ENCODE measurements at regions of chr1 and their contacts with region 1.

Region 1: GRCh38 chr1:26233903-26234643 is at the start of gene CEP85:
- DNase-seq: peak; percentile 98
- total RNA-seq, gene CEP85: 16.7 and 20.8 TPM in 2 replicates

Region 2: DNA sequence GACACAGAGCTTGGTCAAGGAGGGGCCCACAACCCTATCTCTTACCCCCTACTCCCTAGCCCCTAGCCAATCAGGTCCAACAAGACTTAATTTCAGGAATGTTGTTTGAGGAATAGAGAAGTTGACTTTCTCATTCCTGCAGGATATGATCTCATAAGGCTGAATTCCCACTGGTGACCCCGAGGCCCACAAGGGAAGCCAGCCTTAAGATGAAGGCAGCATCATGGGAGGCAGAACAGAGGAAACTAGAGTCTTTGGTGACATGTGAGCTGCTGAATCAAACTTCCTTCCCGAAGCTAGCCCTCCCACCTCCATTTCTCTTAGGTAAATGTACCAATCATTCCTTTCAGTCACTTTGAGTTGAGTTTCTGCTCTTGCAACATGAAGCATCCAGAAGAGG is 131.5 kb before region 1 on chr1:
- in situ Hi-C with region 1: loop called (anchors 10 kb)
- DNase-seq: no peak

Region 3: GRCh38 chr1:26181586-26182382 is 52.3 kb before region 1 on chr1:
- in situ Hi-C with region 1: no loop called
- DNase-seq: no peak